Pancreas (tissue), 10 donors: ENCODE measurements at regions of chr15 and their contacts with region 1.

Region 1: GRCh38 chr15:35444557-35445204 is 101.3 kb downstream of the DPH6 start:
- DNase-seq: no peak
- ATAC-seq: peak in 3 of 4 donors; percentile 53 to 74 (median 59)
- H3K4me3 ChIP-seq: no peak overlapping the region
- H3K27ac ChIP-seq: no peak overlapping the region
- H3K4me1 ChIP-seq: no peaks in the 10 kb centered on the region
- H3K27me3 ChIP-seq: no peaks in the 10 kb centered on the region
- CTCF ChIP-seq: peak; percentile 33 to 70 (median 60)

Region 2: GRCh38 chr15:35078221-35078915 is 366.3 kb before region 1 on chr15:
- intact Hi-C with region 1: loop called in 2 of 3 experiments (anchors 10 kb)
- DNase-seq: no peak
- ATAC-seq: peak in 3 of 4 donors; percentile 83 to 92 (median 90)
- H3K4me3 ChIP-seq: no peak overlapping the region
- H3K27ac ChIP-seq: no peak overlapping the region
- H3K4me1 ChIP-seq: no peaks in the 10 kb centered on the region
- H3K27me3 ChIP-seq: no peaks in the 10 kb centered on the region
- CTCF ChIP-seq: peak; percentile 45 to 75 (median 68)

Region 3: GRCh38 chr15:35289024-35289617 is 155.6 kb before region 1 on chr15:
- intact Hi-C with region 1: loop called in 1 of 3 experiments (anchors 10 kb)
- DNase-seq: no peak
- ATAC-seq: peak; percentile 53 to 89 (median 88)
- H3K4me3 ChIP-seq: no peak overlapping the region
- H3K27ac ChIP-seq: no peak overlapping the region
- H3K4me1 ChIP-seq: no peaks in the 10 kb centered on the region
- H3K27me3 ChIP-seq: no peaks in the 10 kb centered on the region
- CTCF ChIP-seq: peak in 3 of 4 donors; percentile 44 to 55 (median 49)